ENCODE measurements at regions of chr10 and their contacts with region 1.

Region 1: GRCh38 chr10:31603235-31604087 is 284.4 kb downstream of the ZEB1 start:
- DNase-seq: peak; percentile 97 to 98
- ATAC-seq: peak; percentile 90 to 95 (median 92)
- H3K4me3 ChIP-seq: peak overlapping the region; percentile 83
- H3K27ac ChIP-seq: peak overlapping the region; percentile 97
- H3K4me1 ChIP-seq: peaks cover 7% of the 10 kb centered on the region
- H3K27me3 ChIP-seq: no peaks in the 10 kb centered on the region
- CTCF ChIP-seq: no peak

Region 2: GRCh38 chr10:31522820-31523219 is 80.6 kb before region 1 on chr10:
- intact Hi-C with region 1: loop called in 1 of 2 experiments (anchors 5 kb)
- DNase-seq: no peak
- ATAC-seq: peak in 3 of 4 donors; percentile 55 to 82 (median 69)
- H3K4me3 ChIP-seq: no peak overlapping the region
- H3K27ac ChIP-seq: no peak overlapping the region
- H3K4me1 ChIP-seq: peaks cover 17% of the 10 kb centered on the region
- H3K27me3 ChIP-seq: no peaks in the 10 kb centered on the region
- CTCF ChIP-seq: no peak

Region 3: DNA sequence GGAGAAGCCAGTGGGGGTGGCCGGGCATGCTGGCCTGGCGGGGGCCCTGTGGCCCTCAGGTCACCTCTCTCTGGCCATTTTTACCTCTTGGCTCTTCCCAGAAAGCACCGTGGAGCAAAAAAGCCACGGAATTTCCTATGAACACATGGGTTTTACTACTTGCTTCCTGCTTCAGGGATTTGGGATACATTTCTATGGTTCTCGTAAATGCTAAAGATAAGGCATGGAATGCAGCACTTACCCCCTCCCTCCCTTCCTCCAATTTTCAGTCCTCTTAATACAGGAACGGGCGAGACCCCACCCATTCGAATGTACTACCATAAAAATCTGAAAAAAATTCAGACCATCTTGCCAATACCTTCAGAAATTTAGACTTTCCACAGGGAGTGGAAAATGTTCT is 45.5 kb after region 1 on chr10:
- intact Hi-C with region 1: loop called in 1 of 2 experiments (anchors 2 kb)
- DNase-seq: no peak
- ATAC-seq: no peak
- H3K4me3 ChIP-seq: no peak overlapping the region
- H3K27ac ChIP-seq: peak overlapping the region; percentile 71
- H3K4me1 ChIP-seq: no peaks in the 10 kb centered on the region
- H3K27me3 ChIP-seq: no peaks in the 10 kb centered on the region
- CTCF ChIP-seq: no peak

Region 4: GRCh38 chr10:31707093-31708039 is 103.9 kb after region 1 on chr10:
- intact Hi-C with region 1: no loop called
- DNase-seq: peak; percentile 69 to 78
- ATAC-seq: peak; percentile 17 to 49 (median 30)
- H3K4me3 ChIP-seq: peak overlapping the region; percentile 28
- H3K27ac ChIP-seq: peak overlapping the region; percentile 96
- H3K4me1 ChIP-seq: peaks cover 36% of the 10 kb centered on the region
- H3K27me3 ChIP-seq: no peaks in the 10 kb centered on the region
- CTCF ChIP-seq: no peak

Region 5: GRCh38 chr10:31759799-31760626 is 156.6 kb after region 1 on chr10:
- intact Hi-C with region 1: loop called in 1 of 2 experiments (anchors 5 kb)
- DNase-seq: peak; percentile 94 to 96
- ATAC-seq: peak; percentile 90 to 93 (median 92)
- H3K4me3 ChIP-seq: peak overlapping the region; percentile 92
- H3K27ac ChIP-seq: peak overlapping the region; percentile 98
- H3K4me1 ChIP-seq: peaks cover 30% of the 10 kb centered on the region
- H3K27me3 ChIP-seq: no peaks in the 10 kb centered on the region
- CTCF ChIP-seq: no peak

Measured in psoas muscle (tissue), 8 donors.